ENCODE measurements at regions of chr18 and their contacts with region 1.

Region 1: DNA sequence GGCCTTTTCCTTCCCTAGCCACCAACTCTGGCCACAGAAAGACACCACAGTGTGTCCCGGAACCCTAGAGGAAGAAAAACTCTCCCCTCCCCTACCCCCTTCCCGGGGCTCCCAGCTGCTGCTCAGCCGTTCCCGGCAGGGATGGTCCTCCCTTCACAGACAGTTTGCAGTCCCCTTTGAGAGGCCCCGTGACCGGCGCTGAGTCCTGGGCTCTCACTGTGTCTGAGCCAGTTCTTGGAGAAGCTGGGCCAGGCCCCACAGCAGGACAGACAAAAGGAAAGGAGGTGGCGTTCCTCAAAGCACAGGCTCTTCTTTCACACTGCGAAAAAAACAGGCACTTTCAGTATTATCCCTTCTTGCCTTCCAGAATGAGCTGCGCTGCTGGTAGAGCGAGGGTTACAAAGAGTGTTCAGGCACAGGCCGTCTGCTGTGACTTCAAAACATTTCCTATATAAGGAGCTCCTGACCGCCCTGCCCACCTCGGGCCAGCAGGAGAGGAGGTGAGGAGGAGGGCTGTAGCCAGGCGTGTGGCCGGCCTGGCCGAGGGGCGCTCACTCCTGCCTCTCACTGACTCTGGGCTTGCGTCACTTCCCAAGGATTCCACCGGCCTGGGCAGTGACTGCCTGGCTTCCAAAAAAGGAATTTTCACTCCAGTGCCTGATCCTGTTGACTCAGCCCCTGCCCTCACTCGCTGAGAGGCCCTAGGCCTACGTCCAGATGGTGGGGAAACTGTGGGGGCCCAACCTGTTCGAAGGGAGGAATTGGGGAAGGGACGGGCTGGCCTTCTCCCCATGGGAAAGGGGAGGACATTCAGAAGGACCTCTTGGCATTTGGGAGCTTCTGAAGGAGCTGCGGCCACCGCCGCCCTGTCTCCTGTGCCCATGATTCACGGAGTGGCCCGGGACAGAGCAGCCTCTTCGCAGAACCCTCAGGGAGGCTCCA is 24.9 kb downstream of the CIDEA start:
- DNase-seq: peak; percentile 90
- ATAC-seq: peak; percentile 95

Region 2: GRCh38 chr18:11570769-11571168 is 708.2 kb before region 1 on chr18:
- intact Hi-C with region 1: no loop called
- DNase-seq: no peak
- ATAC-seq: no peak

Region 3: GRCh38 chr18:12336875-12337274 is 57.9 kb after region 1 on chr18:
- intact Hi-C with region 1: loop called (anchors 5 kb)
- DNase-seq: no peak
- ATAC-seq: no peak